Common myeloid progenitor, CD34-positive (primary cell): ENCODE measurements at regions of chr9 and their contacts with region 1.

Region 1: DNA sequence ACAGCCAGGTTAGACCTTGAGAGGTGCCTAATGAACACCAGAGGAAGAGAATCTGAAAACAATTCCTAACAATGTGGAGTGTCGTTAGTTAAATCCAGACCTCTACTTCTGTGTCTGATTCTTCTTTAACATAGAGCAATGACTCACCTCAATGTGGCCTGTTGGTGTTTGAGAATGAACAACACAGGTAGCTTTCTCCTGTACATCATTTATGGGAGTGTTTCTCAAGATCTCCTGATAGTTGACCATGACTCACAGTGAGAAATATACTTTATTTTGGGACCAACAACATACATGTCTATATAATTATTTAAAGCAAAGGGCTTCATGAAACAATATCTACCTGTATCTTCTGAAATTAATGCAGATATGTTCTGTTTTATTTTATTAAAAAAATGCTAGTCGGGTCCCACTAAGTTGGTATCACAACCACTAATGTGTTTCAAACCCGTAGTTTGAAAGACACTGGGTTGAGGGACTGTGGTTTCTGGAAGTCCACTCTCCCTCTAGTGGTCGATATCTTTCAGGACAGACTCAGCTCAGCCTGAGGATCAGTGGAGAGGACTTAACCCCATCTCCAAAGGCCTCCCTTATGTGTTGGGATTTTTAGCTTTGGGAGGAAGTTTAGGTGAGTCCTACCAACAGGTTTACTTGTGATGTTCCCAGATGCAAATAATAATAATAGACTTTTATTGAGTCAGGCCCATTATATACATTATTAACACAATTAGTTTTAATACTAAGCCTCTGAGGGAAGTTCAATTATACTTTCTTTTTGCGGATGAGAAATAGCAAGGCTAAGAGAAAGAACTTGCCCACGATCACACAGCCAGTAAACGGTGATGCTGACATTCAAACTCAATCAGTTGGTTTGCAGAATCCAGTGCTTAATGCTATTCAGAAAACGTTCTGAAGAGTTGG is 70.0 kb upstream of the KLF9 start:
- DNase-seq: peak; percentile 51 to 63 (median 57)
- H3K4me3 ChIP-seq: no peak overlapping the region
- H3K27ac ChIP-seq: peak overlapping the region; percentile 34 to 80
- H3K4me1 ChIP-seq: peaks cover 5 to 29% (median 10%) of the 10 kb centered on the region in 4 experiments
- H3K27me3 ChIP-seq: no peaks in the 10 kb centered on the region

Region 2: GRCh38 chr9:70418822-70419545 is 65.5 kb before region 1 on chr9:
- CTCF ChIA-PET with region 1: interaction called, 14 read pairs
- POLR2A ChIA-PET with region 1: interaction called, 16 read pairs
- DNase-seq: peak; percentile 92 to 98 (median 96)
- H3K4me3 ChIP-seq: peak overlapping the region; percentile 12 to 80 (median 65)
- H3K27ac ChIP-seq: peak overlapping the region; percentile 84 to 96
- H3K4me1 ChIP-seq: peaks cover 3 to 49% (median 43%) of the 10 kb centered on the region in 4 experiments
- H3K27me3 ChIP-seq: peaks cover 0 to 5% (median 0%) of the 10 kb centered on the region in 5 experiments